Activated B cell treated with CpG ODN at 0.5 μM for 24 hours (primary cell): ENCODE measurements at regions of chr12 and their contacts with region 1.

Region 1: DNA sequence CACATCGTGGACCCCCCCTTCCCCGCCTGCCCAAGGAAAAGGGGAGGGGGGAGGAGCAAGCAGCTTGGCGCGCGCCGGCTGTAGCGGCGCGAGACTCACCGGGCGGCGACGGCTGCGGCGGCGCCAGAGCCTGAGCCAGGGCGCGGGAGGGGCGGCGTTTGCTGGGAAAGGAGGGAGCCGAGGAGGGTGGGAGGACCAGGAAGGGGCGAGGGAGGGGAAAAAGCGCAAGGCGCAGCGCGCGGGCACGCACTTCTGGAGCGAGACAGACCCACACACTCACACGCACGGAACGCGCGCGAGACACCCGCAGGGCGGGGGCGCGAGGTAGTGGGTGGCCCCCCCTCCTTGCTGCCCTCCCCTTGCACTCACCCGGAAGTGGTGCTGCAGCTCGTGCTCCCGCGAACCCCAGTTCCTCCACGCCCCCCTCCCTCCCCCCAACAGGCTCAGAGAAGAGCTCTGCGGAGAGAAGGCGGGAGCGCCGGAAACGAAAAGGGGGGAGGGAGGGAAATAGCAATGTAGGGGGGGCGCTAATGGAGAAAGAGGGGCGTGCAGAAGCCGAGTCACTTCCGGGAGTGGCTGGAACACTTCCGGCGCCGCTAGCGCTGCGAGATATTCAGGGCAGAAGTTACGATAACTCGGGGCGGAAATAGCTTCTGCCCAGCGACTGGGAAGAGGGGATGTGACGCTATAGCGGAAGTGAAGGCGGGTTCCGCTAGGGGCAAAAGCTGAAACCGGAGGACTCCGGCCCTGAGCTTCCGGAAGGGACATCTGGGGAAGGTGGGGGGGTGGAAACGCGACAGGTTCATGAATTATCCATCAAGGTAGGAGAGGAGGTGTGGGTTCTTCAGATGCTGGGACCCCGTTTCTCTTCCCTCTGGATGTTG is at the start of gene ZNF384:
- DNase-seq: peak; percentile 84
- ATAC-seq: peak; percentile 77
- H3K4me3 Mint-ChIP-seq: peak within 1 kb of the TSS; percentile 94
- H3K27ac Mint-ChIP-seq: peak within 1 kb of the TSS; percentile 96
- H3K4me1 Mint-ChIP-seq: peaks cover 52% of the 10 kb centered on the region
- H3K27me3 Mint-ChIP-seq: no peaks in the 10 kb centered on the region
- CTCF ChIP-seq: no peak
- total RNA-seq, gene ZNF384: 81.7 and 98.6 TPM in 2 replicates

Region 2: DNA sequence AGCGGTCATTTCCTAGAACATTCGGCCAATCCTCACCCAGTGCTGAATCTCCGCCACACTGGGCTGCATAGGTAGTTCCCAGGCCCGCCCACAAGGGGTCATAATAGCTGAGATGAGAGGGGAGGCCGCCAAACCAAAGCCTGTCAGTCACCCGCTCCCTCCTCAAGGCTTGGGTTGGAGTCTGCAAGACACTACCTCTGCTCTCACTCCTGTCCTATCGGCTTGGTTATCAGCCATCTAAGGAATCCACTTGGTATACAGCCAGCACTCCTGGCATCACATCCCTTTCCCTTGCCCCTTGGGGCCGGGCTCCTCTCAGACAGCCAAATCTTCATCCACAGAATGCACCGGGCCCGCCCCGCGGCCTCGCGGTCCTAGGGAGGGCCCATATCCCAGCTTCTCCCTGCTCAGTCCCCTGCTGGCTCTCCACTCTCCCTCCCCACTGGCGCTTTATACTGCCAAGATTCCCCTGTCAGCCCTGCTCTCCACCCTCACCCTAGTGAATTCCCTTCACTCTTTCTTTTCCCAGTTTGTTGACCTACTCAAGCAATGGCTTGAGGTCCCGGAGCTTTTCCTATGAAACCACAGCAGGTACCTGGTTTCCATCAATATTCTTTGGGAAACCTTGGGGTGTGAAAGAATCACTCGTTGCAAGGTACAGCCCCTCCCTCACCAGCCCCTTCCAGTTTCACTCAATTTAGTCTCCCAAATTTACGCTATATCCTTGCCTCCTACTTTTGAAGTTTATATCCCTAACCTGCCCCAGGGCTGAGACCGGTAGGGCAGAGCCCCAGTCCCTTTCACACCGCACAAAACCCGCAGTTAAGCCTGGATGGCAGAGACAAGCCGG is 134.8 kb before region 1 on chr12:
- CTCF ChIA-PET with region 1: interaction called, 5 read pairs
- POLR2A ChIA-PET with region 1: interaction called, 8 read pairs
- intact Hi-C with region 1: loop called (anchors 2 kb)
- DNase-seq: peak; percentile 61
- ATAC-seq: peak; percentile 77
- H3K4me3 Mint-ChIP-seq: peak overlapping the region; percentile 84
- H3K27ac Mint-ChIP-seq: peak overlapping the region; percentile 70
- H3K4me1 Mint-ChIP-seq: peaks cover 45% of the 10 kb centered on the region
- H3K27me3 Mint-ChIP-seq: no peaks in the 10 kb centered on the region
- CTCF ChIP-seq: peak; percentile 43

Region 3: GRCh38 chr12:6607751-6608591 is 81.3 kb before region 1 on chr12:
- CTCF ChIA-PET with region 1: interaction called, 3 read pairs
- POLR2A ChIA-PET with region 1: interaction called, 48 read pairs
- intact Hi-C with region 1: loop called (anchors 1 kb)
- DNase-seq: no peak
- ATAC-seq: peak; percentile 31
- H3K4me3 Mint-ChIP-seq: no peak overlapping the region
- H3K27ac Mint-ChIP-seq: no peak overlapping the region
- H3K4me1 Mint-ChIP-seq: peaks cover 64% of the 10 kb centered on the region
- H3K27me3 Mint-ChIP-seq: no peaks in the 10 kb centered on the region
- CTCF ChIP-seq: no peak

Region 4: GRCh38 chr12:6638305-6638704 is 50.9 kb before region 1 on chr12:
- CTCF ChIA-PET with region 1: interaction called, 4 read pairs
- POLR2A ChIA-PET with region 1: interaction called, 51 read pairs
- intact Hi-C with region 1: loop called (anchors 1 kb)
- DNase-seq: no peak
- ATAC-seq: peak; percentile 26
- H3K4me3 Mint-ChIP-seq: peak overlapping the region; percentile 69
- H3K27ac Mint-ChIP-seq: peak overlapping the region; percentile 85
- H3K4me1 Mint-ChIP-seq: peaks cover 76% of the 10 kb centered on the region
- H3K27me3 Mint-ChIP-seq: no peaks in the 10 kb centered on the region
- CTCF ChIP-seq: no peak

Region 5: DNA sequence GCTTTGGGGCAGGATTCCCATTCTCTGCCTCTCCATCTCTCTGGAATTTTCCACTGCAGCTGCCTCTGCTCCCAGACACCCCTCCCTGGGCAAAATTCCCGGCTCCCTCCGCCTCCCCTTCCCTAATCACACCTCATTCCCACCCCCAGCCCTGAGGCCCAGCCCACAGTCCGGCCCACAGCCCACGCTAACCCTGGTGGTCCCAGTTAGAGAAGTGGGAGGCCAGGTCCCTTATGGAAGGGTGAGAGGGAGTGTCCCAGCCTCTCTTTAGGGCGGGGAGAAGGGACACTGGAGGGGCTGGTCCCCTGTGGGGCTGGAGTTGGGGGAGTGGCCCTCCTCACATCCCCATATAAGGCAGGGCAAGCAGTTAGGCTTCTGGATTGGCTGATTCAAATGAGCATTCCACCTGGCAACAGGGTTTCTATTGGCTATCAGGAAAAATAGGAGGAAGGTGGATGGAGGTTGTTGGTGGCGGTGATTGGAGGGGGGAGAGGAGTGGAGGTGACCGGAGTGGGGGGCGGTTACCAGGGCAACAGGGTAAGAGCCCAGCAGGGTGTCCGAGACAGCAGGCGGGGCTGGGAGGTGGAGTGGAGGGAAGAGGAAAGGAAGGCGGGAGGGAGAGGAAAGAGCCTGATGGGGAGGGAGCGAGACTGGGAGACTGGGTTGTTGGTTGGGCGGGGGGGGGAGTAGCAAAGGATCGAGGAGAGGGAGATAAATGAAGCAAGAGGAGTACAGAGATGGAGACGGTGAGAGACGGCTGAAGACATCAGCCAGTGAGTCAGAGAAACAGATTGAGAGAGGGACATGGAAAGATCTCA is 75.0 kb after region 1 on chr12:
- CTCF ChIA-PET with region 1: interaction called, 6 read pairs
- POLR2A ChIA-PET with region 1: interaction called, 10 read pairs
- intact Hi-C with region 1: no loop called
- DNase-seq: peak; percentile 26
- ATAC-seq: peak; percentile 83
- H3K4me3 Mint-ChIP-seq: peak overlapping the region; percentile 55
- H3K27ac Mint-ChIP-seq: no peak overlapping the region
- H3K4me1 Mint-ChIP-seq: peaks cover 29% of the 10 kb centered on the region
- H3K27me3 Mint-ChIP-seq: peaks cover 31% of the 10 kb centered on the region
- CTCF ChIP-seq: no peak

Region 6: DNA sequence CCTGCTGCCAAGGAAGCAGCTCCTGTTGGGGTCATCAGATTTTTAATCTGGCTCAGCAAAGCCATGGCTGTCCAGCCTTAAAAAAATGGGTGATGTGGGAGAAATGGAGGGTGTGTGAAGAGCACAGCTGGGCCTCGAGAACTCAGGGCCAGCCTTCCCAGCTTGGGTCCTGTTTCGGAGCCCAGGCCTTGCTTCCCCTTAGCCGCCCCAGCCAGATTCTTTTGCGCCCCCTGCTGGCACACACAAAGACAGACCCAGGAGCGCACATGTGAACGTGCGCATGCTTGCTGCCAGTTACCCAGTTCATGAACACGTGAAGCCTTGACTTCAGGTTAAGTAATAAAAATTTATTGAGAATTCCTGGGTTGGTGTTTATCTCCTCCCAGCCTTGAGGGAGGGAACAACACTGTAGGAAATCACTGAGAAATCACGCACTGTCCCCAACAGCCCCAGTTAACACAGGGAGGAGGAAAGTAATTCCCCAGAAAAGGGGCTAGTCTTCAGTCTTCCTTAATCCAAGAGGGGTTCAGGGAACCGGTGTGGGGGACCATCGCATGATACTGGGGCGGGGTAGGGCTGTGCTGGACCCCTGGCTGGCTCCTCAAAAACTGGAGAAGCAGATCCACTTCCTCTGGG is 275.9 kb after region 1 on chr12:
- CTCF ChIA-PET with region 1: no interaction called
- POLR2A ChIA-PET with region 1: interaction called, 5 read pairs
- intact Hi-C with region 1: loop called (anchors 1 kb)
- DNase-seq: peak; percentile 76
- ATAC-seq: peak; percentile 64
- H3K4me3 Mint-ChIP-seq: peak overlapping the region; percentile 11
- H3K27ac Mint-ChIP-seq: peak overlapping the region; percentile 86
- H3K4me1 Mint-ChIP-seq: peaks cover 69% of the 10 kb centered on the region
- H3K27me3 Mint-ChIP-seq: no peaks in the 10 kb centered on the region
- CTCF ChIP-seq: no peak